ENCODE measurements at regions of chr2 and their contacts with region 1.

Region 1: DNA sequence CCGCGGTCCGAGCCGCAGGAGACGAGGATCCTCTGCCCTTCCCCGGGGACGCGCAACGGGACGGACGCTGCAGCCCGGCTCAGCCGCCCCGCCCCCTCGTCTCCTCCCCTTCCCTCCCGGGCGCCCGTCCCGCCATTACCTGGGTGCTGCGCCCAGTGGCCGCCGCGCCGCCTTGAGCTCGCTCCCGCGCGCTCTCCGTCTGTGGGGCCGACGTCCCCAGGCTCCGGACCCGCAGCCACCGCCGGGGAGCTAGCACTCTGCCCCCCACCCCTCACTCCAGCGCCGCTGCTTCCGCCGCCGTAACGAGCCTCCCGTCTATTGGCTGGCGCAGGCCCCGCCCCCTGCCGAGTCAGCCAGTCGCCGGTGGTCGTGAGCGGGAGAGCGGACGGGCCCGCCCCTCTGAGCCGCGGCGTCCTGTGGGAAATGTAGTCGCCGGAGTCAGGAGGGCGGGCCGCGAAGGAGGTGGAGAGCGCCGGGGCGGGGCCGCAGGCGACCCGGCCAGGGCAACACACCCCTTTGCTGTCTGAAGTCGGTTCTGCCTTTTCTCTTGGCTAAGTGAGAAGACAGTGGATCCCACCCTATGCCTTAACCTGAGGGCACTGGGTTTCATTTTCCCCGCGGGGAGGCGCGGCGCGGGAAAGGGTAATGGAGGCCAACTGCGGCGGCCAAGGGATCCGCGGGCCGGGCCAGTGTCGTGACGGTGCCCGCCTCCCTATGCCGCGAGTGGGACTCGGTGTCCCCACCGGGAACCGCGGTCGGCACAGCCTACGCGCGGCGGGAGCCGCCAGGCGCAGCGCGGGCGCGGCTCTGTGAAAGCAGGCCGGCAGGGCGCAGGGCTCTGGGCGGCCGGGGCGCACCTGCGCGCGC is at the start of gene SAP130:
- H3K4me3 ChIP-seq: peak within 1 kb of the TSS; percentile 99
- H3K27ac ChIP-seq: peak within 1 kb of the TSS; percentile 83
- H3K4me1 ChIP-seq: 0 out of 2 replicates have a peak, but pooled peaks cover 3% of the 10 kb centered on the region
- CTCF ChIP-seq: peak; percentile 63

Region 2: DNA sequence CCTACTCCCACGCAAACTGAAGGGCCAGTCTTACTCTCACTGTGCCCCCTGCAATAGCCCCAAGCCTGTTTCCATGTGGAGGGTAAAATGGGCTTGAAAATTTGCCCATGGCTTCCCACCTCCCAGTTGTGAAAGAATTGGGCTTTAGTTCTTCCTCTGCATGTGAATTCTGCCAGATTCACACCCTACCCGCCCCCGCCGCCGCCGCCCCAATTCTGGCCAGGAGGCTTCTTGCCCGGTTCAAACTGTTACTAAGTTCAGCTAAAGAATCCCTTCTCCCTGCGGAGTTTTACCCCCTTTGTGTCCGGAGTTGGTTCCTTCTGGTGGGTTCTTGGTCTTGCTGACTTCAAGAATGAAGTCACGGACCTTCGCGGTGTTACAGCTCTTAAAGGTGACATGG is 25.3 kb after region 1 on chr2:
- CTCF ChIA-PET with region 1: no interaction called
- POLR2A ChIA-PET with region 1: no interaction called
- H3K4me3 ChIP-seq: no peak overlapping the region
- H3K27ac ChIP-seq: no peak overlapping the region
- H3K4me1 ChIP-seq: no peaks in the 10 kb centered on the region
- CTCF ChIP-seq: no peak

Region 3: GRCh38 chr2:128090945-128091725 is 63.1 kb after region 1 on chr2 and contains the start of gene UGGT1:
- CTCF ChIA-PET with region 1: interaction called, 4 read pairs
- POLR2A ChIA-PET with region 1: interaction called, 14 read pairs
- H3K4me3 ChIP-seq: peak within 1 kb of the TSS; percentile 93
- H3K27ac ChIP-seq: peak within 1 kb of the TSS; percentile 78
- H3K4me1 ChIP-seq: peaks cover 15% of the 10 kb centered on the region; the same call in 1 of the 2 replicates
- CTCF ChIP-seq: peak; percentile 44; the same call in 1 of the 2 replicates